Heart right ventricle (tissue), 16 donors: ENCODE measurements at regions of chr7 and their contacts with region 1.

Region 1: GRCh38 chr7:80918909-80919662 is at the start of gene SEMA3C:
- DNase-seq: peak; percentile 84 to 90
- ATAC-seq: peak; percentile 96 to 100 (median 98)
- H3K4me3 ChIP-seq: peak within 1 kb of the TSS; percentile 12 to 76 (median 63)
- H3K27ac ChIP-seq: peak within 1 kb of the TSS; percentile 17 to 84 (median 76)
- H3K4me1 ChIP-seq: peaks cover 0 to 16% (median 5%) of the 10 kb centered on the region in 9 donors
- H3K27me3 ChIP-seq: peaks cover 0 to 11% (median 0%) of the 10 kb centered on the region in 7 donors
- CTCF ChIP-seq: peak in 1 of 9 donors; percentile 20
- total RNA-seq, gene SEMA3C: 41.4 to 83.2 (median 63.0) TPM

Region 2: GRCh38 chr7:80707318-80707717 is 211.8 kb before region 1 on chr7:
- intact Hi-C with region 1: loop called in 2 of 10 experiments (anchors 5 to 10 kb)
- DNase-seq: no peak
- ATAC-seq: no peak
- H3K4me3 ChIP-seq: no peak overlapping the region
- H3K27ac ChIP-seq: no peak overlapping the region
- H3K4me1 ChIP-seq: no peaks in the 10 kb centered on the region
- H3K27me3 ChIP-seq: no peaks in the 10 kb centered on the region
- CTCF ChIP-seq: no peak

Region 3: GRCh38 chr7:80794631-80795573 is 124.2 kb before region 1 on chr7:
- intact Hi-C with region 1: loop called in 1 of 10 experiments (anchors 10 kb)
- DNase-seq: no peak
- ATAC-seq: peak in 5 of 8 donors; percentile 27 to 63 (median 46)
- H3K4me3 ChIP-seq: no peak overlapping the region
- H3K27ac ChIP-seq: peak overlapping the region in 6 of 10 donors; percentile 7 to 70 (median 28)
- H3K4me1 ChIP-seq: peaks cover 0 to 37% (median 19%) of the 10 kb centered on the region in 9 donors
- H3K27me3 ChIP-seq: no peaks in the 10 kb centered on the region
- CTCF ChIP-seq: no peak

Region 4: GRCh38 chr7:81195033-81195432 is 275.9 kb after region 1 on chr7:
- intact Hi-C with region 1: no loop called
- DNase-seq: no peak
- ATAC-seq: no peak
- H3K4me3 ChIP-seq: no peak overlapping the region
- H3K27ac ChIP-seq: no peak overlapping the region
- H3K4me1 ChIP-seq: peaks cover 0 to 12% (median 0%) of the 10 kb centered on the region in 9 donors
- H3K27me3 ChIP-seq: no peaks in the 10 kb centered on the region
- CTCF ChIP-seq: no peak

Region 5: DNA sequence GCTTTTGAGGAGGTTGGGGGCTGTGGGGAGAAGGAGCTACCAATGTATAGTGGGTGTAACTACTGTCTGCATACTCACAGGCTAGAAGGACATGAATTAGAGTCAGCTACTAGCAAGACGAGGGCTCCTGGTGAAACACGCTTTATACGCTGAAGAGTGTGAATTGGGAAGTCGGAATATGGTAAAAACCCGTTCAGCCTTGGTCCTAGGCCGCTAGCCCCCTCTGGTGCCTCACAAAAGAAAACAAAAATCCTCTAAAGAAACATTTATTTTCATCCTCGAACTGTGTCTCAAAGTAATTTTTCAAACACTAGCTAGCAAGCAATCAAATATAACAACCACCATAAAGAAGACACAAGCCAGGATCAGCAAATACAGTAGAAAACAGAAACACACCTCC is 337.9 kb after region 1 on chr7:
- intact Hi-C with region 1: loop called in 7 of 10 experiments (anchors 2 to 10 kb)
- DNase-seq: peak in 1 of 2 donors; percentile 17
- ATAC-seq: peak in 6 of 8 donors; percentile 39 to 67 (median 64)
- H3K4me3 ChIP-seq: no peak overlapping the region
- H3K27ac ChIP-seq: no peak overlapping the region
- H3K4me1 ChIP-seq: no peaks in the 10 kb centered on the region
- H3K27me3 ChIP-seq: no peaks in the 10 kb centered on the region
- CTCF ChIP-seq: peak; percentile 13 to 58 (median 40)

Region 6: GRCh38 chr7:81447351-81447952 is 528.4 kb after region 1 on chr7:
- intact Hi-C with region 1: loop called in 5 of 10 experiments (anchors 5 to 10 kb)
- DNase-seq: no peak
- ATAC-seq: peak in 2 of 8 donors; percentile 16 to 52
- H3K4me3 ChIP-seq: no peak overlapping the region
- H3K27ac ChIP-seq: no peak overlapping the region
- H3K4me1 ChIP-seq: no peaks in the 10 kb centered on the region
- H3K27me3 ChIP-seq: no peaks in the 10 kb centered on the region
- CTCF ChIP-seq: peak in 7 of 9 donors; percentile 16 to 43 (median 31)

Region 7: GRCh38 chr7:81469869-81470723 is 551.0 kb after region 1 on chr7:
- intact Hi-C with region 1: loop called in 1 of 10 experiments (anchors 10 kb)
- DNase-seq: peak; percentile 54 to 69
- ATAC-seq: peak; percentile 77 to 93 (median 86)
- H3K4me3 ChIP-seq: peak overlapping the region in 2 of 10 donors; percentile 3 to 12
- H3K27ac ChIP-seq: peak overlapping the region in 4 of 10 donors; percentile 12 to 27 (median 20)
- H3K4me1 ChIP-seq: peaks cover 0 to 16% (median 0%) of the 10 kb centered on the region in 9 donors
- H3K27me3 ChIP-seq: no peaks in the 10 kb centered on the region
- CTCF ChIP-seq: peak; percentile 26 to 77 (median 67)